Ascending aorta (tissue), 2 donors: ENCODE measurements at regions of chr3 and their contacts with region 1.

Region 1: GRCh38 chr3:176953106-176954060 is 243.9 kb downstream of the TBL1XR1 start:
- DNase-seq: no peak
- H3K4me3 ChIP-seq: no peak overlapping the region
- H3K27ac ChIP-seq: no peak overlapping the region
- H3K4me1 ChIP-seq: peaks cover 0 to 25% of the 10 kb centered on the region in 2 donors
- H3K27me3 ChIP-seq: no peaks in the 10 kb centered on the region
- CTCF ChIP-seq: no peak

Region 2: DNA sequence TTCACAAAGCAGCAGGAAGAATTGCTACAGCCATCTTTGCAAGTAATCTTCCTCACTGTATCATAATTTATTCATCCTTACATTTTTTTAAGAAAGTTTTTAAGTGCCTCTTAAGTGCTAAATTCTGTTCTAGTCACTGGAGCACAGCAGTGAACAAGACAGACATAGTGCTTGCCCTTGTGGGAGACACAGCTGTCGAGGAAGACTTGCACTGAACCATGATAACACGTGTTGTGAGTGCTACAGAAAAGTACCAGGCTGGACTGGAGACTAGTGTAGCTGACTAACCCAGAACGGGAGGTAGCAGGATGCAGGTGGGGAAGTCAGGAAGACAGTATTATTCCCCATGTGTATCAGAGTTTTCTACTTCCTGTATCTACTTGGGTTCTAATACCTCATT is 56.7 kb before region 1 on chr3:
- intact Hi-C with region 1: no loop called
- DNase-seq: no peak
- H3K4me3 ChIP-seq: no peak overlapping the region
- H3K27ac ChIP-seq: no peak overlapping the region
- H3K4me1 ChIP-seq: no peaks in the 10 kb centered on the region
- H3K27me3 ChIP-seq: no peaks in the 10 kb centered on the region
- CTCF ChIP-seq: no peak

Region 3: GRCh38 chr3:178385280-178385952 is 1432.0 kb after region 1 on chr3:
- intact Hi-C with region 1: loop called (anchors 10 kb)
- DNase-seq: no peak
- H3K4me3 ChIP-seq: no peak overlapping the region
- H3K27ac ChIP-seq: peak overlapping the region in 1 of 2 donors; percentile 43
- H3K4me1 ChIP-seq: peaks cover 3 to 17% of the 10 kb centered on the region in 2 donors
- H3K27me3 ChIP-seq: no peaks in the 10 kb centered on the region
- CTCF ChIP-seq: peak; percentile 75 to 87 (median 82)